ENCODE measurements at regions of chr2 and their contacts with region 1.

Region 1: GRCh38 chr2:28392297-28393113 is at the start of gene FOSL2:
- DNase-seq: peak; percentile 100
- H3K4me3 ChIP-seq: peak within 1 kb of the TSS; percentile 74
- H3K27ac ChIP-seq: peak within 1 kb of the TSS; percentile 99
- H3K27me3 ChIP-seq: no peaks in the 10 kb centered on the region
- CTCF ChIP-seq: peak; percentile 8; the same call in 1 of the 2 replicates
- polyA plus RNA-seq, gene FOSL2: 45.3 and 50.3 TPM in 2 replicates

Region 2: GRCh38 chr2:27798948-27799645 is 593.4 kb before region 1 on chr2:
- CTCF ChIA-PET with region 1: no interaction called
- POLR2A ChIA-PET with region 1: interaction called, 10 read pairs
- DNase-seq: peak; percentile 100
- H3K4me3 ChIP-seq: no peak overlapping the region
- H3K27ac ChIP-seq: peak overlapping the region; percentile 99
- H3K27me3 ChIP-seq: no peaks in the 10 kb centered on the region
- CTCF ChIP-seq: no peak

Region 3: GRCh38 chr2:28175028-28175427 is 217.5 kb before region 1 on chr2:
- CTCF ChIA-PET with region 1: no interaction called
- POLR2A ChIA-PET with region 1: no interaction called
- DNase-seq: no peak
- H3K4me3 ChIP-seq: no peak overlapping the region
- H3K27ac ChIP-seq: no peak overlapping the region
- H3K27me3 ChIP-seq: no peaks in the 10 kb centered on the region
- CTCF ChIP-seq: no peak

Region 4: GRCh38 chr2:28252311-28252710 is 140.2 kb before region 1 on chr2:
- CTCF ChIA-PET with region 1: no interaction called
- POLR2A ChIA-PET with region 1: no interaction called
- DNase-seq: no peak
- H3K4me3 ChIP-seq: no peak overlapping the region
- H3K27ac ChIP-seq: no peak overlapping the region
- H3K27me3 ChIP-seq: no peaks in the 10 kb centered on the region
- CTCF ChIP-seq: no peak

Region 5: GRCh38 chr2:28276076-28276618 is 116.4 kb before region 1 on chr2:
- CTCF ChIA-PET with region 1: no interaction called
- POLR2A ChIA-PET with region 1: interaction called, 12 read pairs
- DNase-seq: peak; percentile 97
- H3K4me3 ChIP-seq: no peak overlapping the region
- H3K27ac ChIP-seq: peak overlapping the region; percentile 95
- H3K27me3 ChIP-seq: no peaks in the 10 kb centered on the region
- CTCF ChIP-seq: no peak

Region 6: GRCh38 chr2:28300485-28301341 is 91.8 kb before region 1 on chr2:
- CTCF ChIA-PET with region 1: no interaction called
- POLR2A ChIA-PET with region 1: interaction called, 20 read pairs
- DNase-seq: peak; percentile 95
- H3K4me3 ChIP-seq: peak overlapping the region; percentile 37
- H3K27ac ChIP-seq: peak overlapping the region; percentile 98
- H3K27me3 ChIP-seq: no peaks in the 10 kb centered on the region
- CTCF ChIP-seq: no peak

Region 7: DNA sequence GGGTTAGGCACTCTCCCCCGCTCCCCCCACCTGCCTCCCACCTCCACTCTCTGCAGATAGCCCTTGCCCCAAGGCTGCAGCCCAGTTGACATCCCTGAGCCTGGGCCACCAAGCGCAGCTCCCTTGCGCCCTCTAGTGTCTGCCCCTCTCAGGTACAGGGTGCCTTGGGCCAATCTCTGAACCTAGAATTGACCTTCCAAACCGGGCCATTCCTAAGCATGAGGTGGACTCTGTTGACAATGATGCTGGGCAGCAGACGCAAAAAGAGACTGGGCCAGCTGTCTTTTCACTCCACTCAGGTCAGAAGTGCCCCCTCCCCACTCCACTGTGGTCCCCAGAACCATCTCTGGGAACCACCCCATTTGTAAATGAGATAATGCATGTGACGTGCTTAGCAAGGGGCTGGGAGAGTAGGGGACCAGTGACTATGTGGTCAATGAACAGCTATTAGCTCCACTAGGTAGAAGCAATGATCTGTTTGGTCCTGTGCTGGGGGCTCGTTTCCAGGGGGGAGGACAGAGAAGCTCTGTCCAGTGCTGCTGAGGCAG is 60.1 kb after region 1 on chr2:
- CTCF ChIA-PET with region 1: no interaction called
- POLR2A ChIA-PET with region 1: no interaction called
- DNase-seq: no peak
- H3K4me3 ChIP-seq: no peak overlapping the region
- H3K27ac ChIP-seq: no peak overlapping the region
- H3K27me3 ChIP-seq: no peaks in the 10 kb centered on the region
- CTCF ChIP-seq: peak; percentile 90

Measured in AG04450 (cell line).